Vagina (tissue), 2 donors: ENCODE measurements at regions of chr7 and their contacts with region 1.

Region 1: DNA sequence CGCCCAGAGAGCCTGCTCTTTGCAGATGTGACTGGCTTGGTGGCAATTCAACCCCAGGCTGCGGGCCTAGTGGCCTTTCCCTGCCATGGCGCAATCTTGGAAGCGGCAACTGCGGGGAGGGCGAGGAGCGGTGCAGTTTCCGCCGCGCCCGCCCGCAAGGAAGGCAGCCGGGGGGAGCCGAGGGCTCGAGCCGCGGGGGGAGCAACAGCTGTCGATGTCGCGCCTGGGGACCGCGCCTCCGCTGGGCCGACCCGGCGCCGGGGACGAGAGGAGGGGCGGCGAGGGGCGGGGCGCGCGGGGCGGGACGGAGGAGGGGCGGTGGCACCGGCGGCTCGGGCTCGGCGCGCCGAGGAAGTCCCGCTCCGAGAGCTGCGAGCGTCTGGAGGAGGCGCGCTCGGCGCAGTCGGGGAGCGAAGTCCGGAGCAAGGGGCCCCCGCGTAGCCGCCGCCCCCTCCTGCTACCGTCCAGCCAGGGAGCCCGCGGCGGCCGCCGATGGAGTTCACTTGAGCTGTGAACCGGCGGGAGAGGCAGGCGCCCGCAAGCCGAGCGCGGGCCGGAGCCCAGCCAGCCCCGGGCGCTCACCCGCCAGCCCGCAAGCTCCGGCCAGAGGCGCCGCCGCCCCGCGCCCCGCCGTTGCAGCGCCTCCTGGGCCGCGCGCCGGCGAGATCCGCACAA is 438.1 kb upstream of the GALNT17 start:
- DNase-seq: no peak
- H3K4me3 ChIP-seq: peak overlapping the region; percentile 75 to 87
- H3K27ac ChIP-seq: peak overlapping the region; percentile 75
- H3K4me1 ChIP-seq: peaks cover 27% of the 10 kb centered on the region
- H3K27me3 ChIP-seq: no peaks in the 10 kb centered on the region
- CTCF ChIP-seq: no peak
- POLR2A ChIP-seq: peak in 1 of 2 donors; percentile 73

Region 2: GRCh38 chr7:70392256-70392876 is 301.5 kb before region 1 on chr7:
- intact Hi-C with region 1: loop called (anchors 10 kb)
- DNase-seq: no peak
- H3K4me3 ChIP-seq: no peak overlapping the region
- H3K27ac ChIP-seq: no peak overlapping the region
- H3K4me1 ChIP-seq: no peaks in the 10 kb centered on the region
- H3K27me3 ChIP-seq: no peaks in the 10 kb centered on the region
- CTCF ChIP-seq: no peak
- POLR2A ChIP-seq: no peak

Region 3: DNA sequence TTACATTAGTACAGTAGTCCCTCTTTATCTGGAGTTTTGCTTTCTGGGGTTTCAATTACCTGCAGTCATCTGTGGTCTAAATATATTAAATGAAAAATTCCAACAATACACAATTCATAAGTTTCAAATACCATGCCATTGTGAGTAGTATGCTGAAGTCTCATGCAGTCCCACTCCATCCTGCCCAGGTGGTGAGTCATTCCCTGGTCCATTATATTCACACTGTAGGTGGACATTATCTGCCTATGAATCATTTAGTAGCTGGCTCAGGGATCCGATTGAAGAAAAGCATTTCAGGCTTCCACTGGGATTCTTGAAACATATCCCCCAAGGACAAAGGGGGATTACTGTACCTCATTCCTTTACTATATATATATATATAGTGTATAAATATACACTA is 139.9 kb after region 1 on chr7:
- intact Hi-C with region 1: no loop called
- DNase-seq: no peak
- H3K4me3 ChIP-seq: no peak overlapping the region
- H3K27ac ChIP-seq: no peak overlapping the region
- H3K4me1 ChIP-seq: no peaks in the 10 kb centered on the region
- H3K27me3 ChIP-seq: no peaks in the 10 kb centered on the region
- CTCF ChIP-seq: no peak
- POLR2A ChIP-seq: no peak